ENCODE measurements at regions of chrX and their contacts with region 1.

Region 1: GRCh38 chrX:143027275-143027674 is 1.5 kb downstream of the SPANXN4 start:
- DNase-seq: no peak
- H3K4me3 ChIP-seq: no peak overlapping the region
- H3K27ac ChIP-seq: no peak overlapping the region
- H3K4me1 ChIP-seq: no peaks in the 10 kb centered on the region
- H3K27me3 ChIP-seq: no peaks in the 10 kb centered on the region
- CTCF ChIP-seq: no peak
- EP300 ChIP-seq: no peak
- POLR2A ChIP-seq: no peak

Region 2: GRCh38 chrX:143095311-143095710 is 68.0 kb after region 1 on chrX:
- intact Hi-C with region 1: loop called in 1 of 4 experiments (anchors 2 kb)
- DNase-seq: no peak
- H3K4me3 ChIP-seq: no peak overlapping the region
- H3K27ac ChIP-seq: no peak overlapping the region
- H3K4me1 ChIP-seq: no peaks in the 10 kb centered on the region
- H3K27me3 ChIP-seq: no peaks in the 10 kb centered on the region
- CTCF ChIP-seq: no peak
- EP300 ChIP-seq: no peak
- POLR2A ChIP-seq: no peak